ENCODE measurements at regions of chr15 and their contacts with region 1.

Region 1: GRCh38 chr15:40108855-40109735 is at the start of gene BMF:
- DNase-seq: peak; percentile 87 to 98 (median 95)
- H3K4me3 ChIP-seq: peak within 1 kb of the TSS; percentile 86
- H3K4me3 Mint-ChIP-seq: peak within 1 kb of the TSS; percentile 91 to 99 (median 97)
- H3K27ac ChIP-seq: peak within 1 kb of the TSS; percentile 19
- H3K27ac Mint-ChIP-seq: peak within 1 kb of the TSS; percentile 75 to 99 (median 92)
- H3K4me1 ChIP-seq: peaks cover 38% of the 10 kb centered on the region
- H3K4me1 Mint-ChIP-seq: peaks cover 42 to 51% (median 49%) of the 10 kb centered on the region in 3 donors
- H3K27me3 ChIP-seq: no peaks in the 10 kb centered on the region
- H3K27me3 Mint-ChIP-seq: peaks cover 5 to 14% of the 10 kb centered on the region in 2 donors
- total RNA-seq, gene BMF: 15.3 to 16.8 TPM

Region 2: GRCh38 chr15:40054605-40055545 is 54.2 kb before region 1 on chr15:
- CTCF ChIA-PET with region 1: interaction called, 140 read pairs
- POLR2A ChIA-PET with region 1: interaction called, 7 read pairs
- DNase-seq: peak in 2 of 5 donors; percentile 37 to 64
- H3K4me3 ChIP-seq: peak overlapping the region; percentile 20
- H3K4me3 Mint-ChIP-seq: peak overlapping the region in 6 of 7 donors; percentile 29 to 77 (median 64)
- H3K27ac ChIP-seq: no peak overlapping the region
- H3K27ac Mint-ChIP-seq: peak overlapping the region in 5 of 8 donors; percentile 29 to 83 (median 70)
- H3K4me1 ChIP-seq: peaks cover 40% of the 10 kb centered on the region
- H3K4me1 Mint-ChIP-seq: peaks cover 58 to 84% (median 74%) of the 10 kb centered on the region in 3 donors
- H3K27me3 ChIP-seq: no peaks in the 10 kb centered on the region
- H3K27me3 Mint-ChIP-seq: no peaks in the 10 kb centered on the region

Region 3: GRCh38 chr15:40069178-40070165 is 39.6 kb before region 1 on chr15:
- CTCF ChIA-PET with region 1: interaction called, 30 read pairs
- POLR2A ChIA-PET with region 1: no interaction called
- DNase-seq: no peak
- H3K4me3 ChIP-seq: no peak overlapping the region
- H3K4me3 Mint-ChIP-seq: no peak overlapping the region
- H3K27ac ChIP-seq: no peak overlapping the region
- H3K27ac Mint-ChIP-seq: no peak overlapping the region
- H3K4me1 ChIP-seq: peaks cover 6% of the 10 kb centered on the region
- H3K4me1 Mint-ChIP-seq: peaks cover 10 to 14% (median 13%) of the 10 kb centered on the region in 3 donors
- H3K27me3 ChIP-seq: no peaks in the 10 kb centered on the region
- H3K27me3 Mint-ChIP-seq: no peaks in the 10 kb centered on the region

Region 4: DNA sequence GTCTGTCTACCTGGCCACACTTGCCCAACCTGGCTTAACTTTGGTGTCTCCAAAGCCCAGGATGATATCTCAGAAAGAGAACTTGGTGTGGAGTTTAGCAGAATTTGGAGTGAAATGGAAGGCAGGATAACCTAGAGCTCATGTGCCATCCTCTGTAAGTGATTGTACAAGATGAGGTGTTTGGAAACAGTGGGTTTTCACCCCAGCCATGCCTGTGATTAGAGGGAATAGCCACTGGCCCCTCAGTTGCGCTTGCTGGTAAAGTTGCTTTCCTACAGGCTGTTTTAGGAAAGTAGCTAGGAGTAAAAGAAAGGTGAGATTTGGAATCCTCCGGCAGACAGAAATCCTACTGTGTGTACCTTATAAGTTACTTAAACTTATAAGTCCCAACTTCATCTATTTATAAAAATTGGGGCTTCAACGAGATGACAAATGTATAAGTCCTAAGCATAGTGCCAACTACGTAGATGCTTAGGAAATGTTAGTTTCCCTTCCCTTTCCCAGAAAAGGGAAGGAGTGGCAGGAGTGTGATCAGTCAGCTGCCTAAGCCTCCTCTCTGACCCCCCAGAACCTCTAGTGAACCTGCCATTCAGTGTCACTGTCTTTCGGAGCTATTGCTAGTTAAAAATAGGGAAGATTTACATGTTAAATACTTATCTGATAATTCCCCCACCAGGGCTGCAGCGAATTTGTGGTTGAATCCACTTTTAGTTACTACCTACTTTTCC is 13.0 kb after region 1 on chr15:
- CTCF ChIA-PET with region 1: interaction called, 10 read pairs
- POLR2A ChIA-PET with region 1: no interaction called
- DNase-seq: no peak
- H3K4me3 ChIP-seq: no peak overlapping the region
- H3K4me3 Mint-ChIP-seq: no peak overlapping the region
- H3K27ac ChIP-seq: no peak overlapping the region
- H3K27ac Mint-ChIP-seq: no peak overlapping the region
- H3K4me1 ChIP-seq: no peaks in the 10 kb centered on the region
- H3K4me1 Mint-ChIP-seq: no peaks in the 10 kb centered on the region
- H3K27me3 ChIP-seq: no peaks in the 10 kb centered on the region
- H3K27me3 Mint-ChIP-seq: peaks cover 0 to 4% of the 10 kb centered on the region in 2 donors

Measured in CD8-positive, alpha-beta memory T cell (primary cell).